Activated CD4-positive, alpha-beta memory T cell treated with anti-CD3 and anti-CD28 coated beads for 36 hours (primary cell): ENCODE measurements at regions of chr19 and their contacts with region 1.

Region 1: GRCh38 chr19:7919610-7920518 is at the start of gene SNAPC2:
- DNase-seq: peak; percentile 98
- H3K4me3 Mint-ChIP-seq: peak within 1 kb of the TSS; percentile 83
- H3K27ac Mint-ChIP-seq: peak within 1 kb of the TSS; percentile 84
- H3K4me1 Mint-ChIP-seq: peaks cover 33% of the 10 kb centered on the region
- H3K27me3 Mint-ChIP-seq: peaks cover 22% of the 10 kb centered on the region
- total RNA-seq, gene SNAPC2: 18.7 to 20.2 TPM

Region 2: GRCh38 chr19:7636691-7637373 is 283.0 kb before region 1 on chr19 and contains the start of gene STXBP2:
- CTCF ChIA-PET with region 1: no interaction called
- POLR2A ChIA-PET with region 1: no interaction called
- intact Hi-C with region 1: loop called (anchors 5 kb)
- DNase-seq: peak; percentile 95
- H3K4me3 Mint-ChIP-seq: peak within 1 kb of the TSS; percentile 79
- H3K27ac Mint-ChIP-seq: peak within 1 kb of the TSS; percentile 79
- H3K4me1 Mint-ChIP-seq: peaks cover 29% of the 10 kb centered on the region
- H3K27me3 Mint-ChIP-seq: no peaks in the 10 kb centered on the region
- total RNA-seq, gene STXBP2: 109 to 111 TPM

Region 3: GRCh38 chr19:7829561-7830271 is 90.1 kb before region 1 on chr19 and contains the start of gene EVI5L:
- CTCF ChIA-PET with region 1: no interaction called
- POLR2A ChIA-PET with region 1: no interaction called
- intact Hi-C with region 1: loop called (anchors 1 kb)
- DNase-seq: peak; percentile 99
- H3K4me3 Mint-ChIP-seq: peak within 1 kb of the TSS; percentile 81
- H3K27ac Mint-ChIP-seq: peak within 1 kb of the TSS; percentile 55
- H3K4me1 Mint-ChIP-seq: peaks cover 17% of the 10 kb centered on the region
- H3K27me3 Mint-ChIP-seq: peaks cover 3% of the 10 kb centered on the region
- total RNA-seq, gene EVI5L: 5.0 to 5.6 TPM

Region 4: DNA sequence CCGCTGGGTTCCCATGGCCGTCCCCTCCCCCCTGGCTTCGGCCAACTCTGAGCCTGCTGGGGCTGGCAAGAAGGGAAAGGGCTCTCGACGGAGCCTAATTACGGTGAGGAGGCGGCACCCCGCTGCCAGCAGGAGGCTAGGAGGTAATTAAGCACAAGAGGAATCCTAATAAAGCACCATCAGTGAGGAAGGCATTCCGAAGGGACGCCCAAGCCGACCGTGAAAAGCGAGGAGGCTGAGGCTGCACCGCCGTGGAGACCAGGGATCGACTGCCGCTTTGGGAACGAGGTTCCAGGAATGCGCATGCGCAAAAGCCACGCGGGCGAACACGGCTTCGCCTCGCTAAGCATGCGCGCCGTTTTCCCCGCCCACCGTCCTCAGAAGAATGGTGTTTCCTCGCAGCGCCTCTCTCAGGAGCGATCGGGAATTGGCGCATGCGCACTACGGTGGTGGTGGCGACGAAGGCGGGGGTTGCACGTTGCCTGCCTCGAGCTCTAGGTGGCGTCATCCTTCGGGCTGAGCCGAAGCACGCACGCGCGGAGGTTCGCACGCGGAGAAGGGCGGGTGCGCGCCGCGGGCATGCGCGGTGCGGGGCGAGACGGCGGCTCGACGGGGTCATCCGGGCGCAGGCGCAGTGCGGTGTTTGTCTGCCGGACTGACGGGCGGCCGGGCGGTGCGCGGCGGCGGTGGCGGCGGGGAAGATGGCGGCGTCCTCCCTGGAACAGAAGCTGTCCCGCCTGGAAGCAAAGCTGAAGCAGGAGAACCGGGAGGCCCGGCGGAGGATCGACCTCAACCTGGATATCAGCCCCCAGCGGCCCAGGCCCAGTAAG is 16.4 kb before region 1 on chr19 and contains the start of gene MAP2K7:
- CTCF ChIA-PET with region 1: interaction called, 18 read pairs
- POLR2A ChIA-PET with region 1: interaction called, 7 read pairs
- intact Hi-C with region 1: loop called (anchors 1 kb)
- DNase-seq: peak; percentile 100
- H3K4me3 Mint-ChIP-seq: peak within 1 kb of the TSS; percentile 86
- H3K27ac Mint-ChIP-seq: peak within 1 kb of the TSS; percentile 93
- H3K4me1 Mint-ChIP-seq: peaks cover 21% of the 10 kb centered on the region
- H3K27me3 Mint-ChIP-seq: peaks cover 3% of the 10 kb centered on the region
- total RNA-seq, gene MAP2K7: 29.1 to 30.1 TPM